ENCODE measurements at regions of chr15 and their contacts with region 1.

Region 1: GRCh38 chr15:64460206-64460734 is at the start of gene ZNF609:
- DNase-seq: peak; percentile 90 to 98 (median 94)
- H3K4me3 ChIP-seq: peak within 1 kb of the TSS in 2 of 4 donors; percentile 31 to 95
- H3K27ac ChIP-seq: peak within 1 kb of the TSS in 4 of 5 donors; percentile 40 to 98 (median 82)
- H3K4me1 ChIP-seq: peaks cover 28 to 62% of the 10 kb centered on the region in 2 donors
- H3K27me3 ChIP-seq: no peaks in the 10 kb centered on the region
- CTCF ChIP-seq: peak in 1 of 6 experiments; percentile 59
- POLR2A ChIP-seq: peak; percentile 73 to 97
- total RNA-seq, gene ZNF609: 19.3 to 35.5 (median 26.3) TPM

Region 2: GRCh38 chr15:64622410-64623260 is 162.4 kb after region 1 on chr15:
- intact Hi-C with region 1: no loop called
- DNase-seq: no peak
- H3K4me3 ChIP-seq: no peak overlapping the region
- H3K27ac ChIP-seq: peak overlapping the region in 1 of 5 donors; percentile 23
- H3K4me1 ChIP-seq: peaks cover 10 to 45% of the 10 kb centered on the region in 2 donors
- H3K27me3 ChIP-seq: no peaks in the 10 kb centered on the region
- CTCF ChIP-seq: no peak
- POLR2A ChIP-seq: no peak

Region 3: DNA sequence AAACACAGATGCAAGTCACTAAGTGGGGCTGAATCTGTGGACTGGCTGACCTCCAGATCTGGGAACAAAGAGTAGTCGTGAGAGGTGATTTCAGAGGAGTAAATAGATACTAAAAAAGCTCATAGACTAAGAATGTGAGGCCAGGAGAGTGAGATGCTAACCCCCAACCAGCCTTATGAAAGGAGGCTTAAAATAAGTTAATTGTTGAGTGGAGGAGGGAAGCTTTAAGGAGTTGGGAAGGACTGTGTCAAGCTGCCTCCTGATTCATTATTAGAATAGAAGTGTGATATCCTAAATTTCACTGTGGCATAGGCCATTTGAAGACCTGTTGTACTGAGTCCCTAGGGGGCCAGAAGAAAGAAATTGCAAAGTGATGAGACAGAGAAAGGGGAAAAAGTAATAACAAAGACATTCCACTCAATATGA is 207.5 kb after region 1 on chr15:
- intact Hi-C with region 1: loop called in 1 of 2 experiments (anchors 10 kb)
- DNase-seq: no peak
- H3K4me3 ChIP-seq: no peak overlapping the region
- H3K27ac ChIP-seq: no peak overlapping the region
- H3K4me1 ChIP-seq: no peaks in the 10 kb centered on the region
- H3K27me3 ChIP-seq: no peaks in the 10 kb centered on the region
- CTCF ChIP-seq: no peak
- POLR2A ChIP-seq: no peak